Motor neuron (in vitro differentiated cells): ENCODE measurements at regions of chr1 and their contacts with region 1.

Region 1: GRCh38 chr1:241895013-241895412 is 47.0 kb downstream of the EXO1 start:
- ATAC-seq: no peak
- H3K4me3 ChIP-seq: no peak overlapping the region
- H3K27ac ChIP-seq: no peak overlapping the region
- H3K4me1 ChIP-seq: no peaks in the 10 kb centered on the region

Region 2: GRCh38 chr1:241985787-241986186 is 90.8 kb after region 1 on chr1:
- in situ Hi-C with region 1: loop called in 4 of 9 experiments (anchors 10 to 25 kb)
- ATAC-seq: peak in 2 of 8 experiments; percentile 29 to 32
- H3K4me3 ChIP-seq: no peak overlapping the region
- H3K27ac ChIP-seq: no peak overlapping the region
- H3K4me1 ChIP-seq: peaks cover 0 to 19% of the 10 kb centered on the region in 2 donors

Region 3: GRCh38 chr1:241998412-241998921 is 103.5 kb after region 1 on chr1:
- in situ Hi-C with region 1: loop called in 3 of 9 experiments (anchors 25 kb)
- ATAC-seq: peak; percentile 52 to 92 (median 66)
- H3K4me3 ChIP-seq: peak overlapping the region in 3 of 5 donors; percentile 7 to 14 (median 10)
- H3K27ac ChIP-seq: no peak overlapping the region
- H3K4me1 ChIP-seq: peaks cover 4 to 10% of the 10 kb centered on the region in 2 donors

Region 4: DNA sequence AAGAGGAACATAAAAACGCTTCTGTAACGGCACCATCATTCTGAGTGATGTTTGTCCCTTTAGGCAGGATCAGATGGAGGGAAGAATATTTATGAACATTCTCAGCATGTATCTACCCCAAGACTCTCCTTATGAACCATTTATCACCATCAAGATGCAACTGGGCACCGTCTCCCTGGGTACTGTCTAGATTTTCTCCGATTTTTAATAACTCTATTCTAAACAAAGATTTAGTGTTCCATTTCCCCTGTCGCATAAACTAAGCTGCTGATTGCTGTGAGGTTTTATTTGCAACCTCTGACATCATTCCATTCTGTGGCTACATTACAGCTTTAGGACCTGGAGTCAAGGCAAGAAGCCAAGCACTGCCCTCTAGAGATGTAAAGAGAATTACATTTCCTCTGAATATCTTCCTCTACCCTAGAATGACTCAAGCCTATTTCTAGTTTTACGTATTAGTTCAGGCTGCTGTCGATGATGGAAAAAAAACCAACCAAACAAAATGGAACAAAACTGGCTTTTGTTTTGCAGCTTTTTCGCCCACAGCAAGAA is 234.0 kb after region 1 on chr1:
- in situ Hi-C with region 1: no loop called
- ATAC-seq: peak in 6 of 8 experiments; percentile 29 to 90 (median 78)
- H3K4me3 ChIP-seq: no peak overlapping the region
- H3K27ac ChIP-seq: no peak overlapping the region
- H3K4me1 ChIP-seq: peaks cover 7 to 12% of the 10 kb centered on the region in 2 donors